Activated B cell treated with CpG ODN at 0.5 μM for 24 hours (primary cell): ENCODE measurements at regions of chr2 and their contacts with region 1.

Region 1: GRCh38 chr2:1528273-1529064 is 115.2 kb downstream of the TPO start:
- DNase-seq: no peak
- ATAC-seq: no peak
- H3K4me3 Mint-ChIP-seq: no peak overlapping the region
- H3K27ac Mint-ChIP-seq: no peak overlapping the region
- H3K4me1 Mint-ChIP-seq: no peaks in the 10 kb centered on the region
- H3K27me3 Mint-ChIP-seq: no peaks in the 10 kb centered on the region
- CTCF ChIP-seq: no peak

Region 2: DNA sequence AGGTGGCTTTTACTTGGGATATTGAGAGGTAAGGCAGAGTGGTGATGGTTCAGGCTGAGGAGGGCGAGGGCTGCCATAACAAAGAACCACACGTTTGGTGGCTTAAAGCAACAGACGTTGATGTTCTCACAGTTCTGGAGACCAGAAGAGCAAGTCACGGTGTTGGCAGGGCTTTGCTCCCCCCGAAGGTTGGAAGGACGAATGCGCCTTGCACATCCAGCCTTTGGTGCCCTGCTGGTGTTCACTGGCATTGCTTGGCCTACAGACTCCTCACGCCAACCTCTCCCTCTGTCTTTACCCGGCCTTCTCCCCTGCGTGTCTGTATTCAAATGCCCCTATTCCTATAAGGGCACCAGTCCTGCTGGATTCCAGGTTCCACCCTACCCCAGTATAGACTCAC is 10.2 kb after region 1 on chr2:
- CTCF ChIA-PET with region 1: no interaction called
- POLR2A ChIA-PET with region 1: no interaction called
- intact Hi-C with region 1: loop called (anchors 1 kb)
- DNase-seq: no peak
- ATAC-seq: no peak
- H3K4me3 Mint-ChIP-seq: no peak overlapping the region
- H3K27ac Mint-ChIP-seq: no peak overlapping the region
- H3K4me1 Mint-ChIP-seq: no peaks in the 10 kb centered on the region
- H3K27me3 Mint-ChIP-seq: peaks cover 12% of the 10 kb centered on the region
- CTCF ChIP-seq: no peak